MCF 10A (cell line): ENCODE measurements at regions of chr5 and their contacts with region 1.

Region 1: GRCh38 chr5:50962934-50963872 is 296.8 kb downstream of the PARP8 start:
- DNase-seq: peak; percentile 77
- H3K4me3 Mint-ChIP-seq: peak overlapping the region; percentile 74
- H3K27ac Mint-ChIP-seq: no peak overlapping the region
- H3K4me1 Mint-ChIP-seq: peaks cover under 1% of the 10 kb centered on the region
- H3K27me3 Mint-ChIP-seq: peaks cover 78% of the 10 kb centered on the region
- CTCF ChIP-seq: peak; percentile 98

Region 2: DNA sequence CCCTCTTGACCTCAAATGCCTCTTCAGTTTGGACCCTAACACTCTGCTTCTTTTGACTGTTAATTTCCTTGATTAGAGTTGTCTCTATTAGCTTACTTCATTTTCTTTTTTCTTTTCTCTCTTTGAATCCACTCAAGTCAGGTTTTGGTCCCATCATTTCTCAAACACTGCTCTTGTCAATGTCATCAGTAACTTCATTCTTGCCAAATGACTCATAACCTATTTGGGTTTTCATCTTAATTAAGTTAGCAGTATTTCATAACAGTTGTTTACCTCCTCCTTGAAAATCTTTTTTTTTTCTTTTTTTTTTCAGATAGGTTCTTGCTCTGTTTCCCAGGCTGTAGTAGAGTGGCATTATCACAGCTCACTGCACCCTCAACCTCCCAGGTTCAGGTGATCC is 177.1 kb before region 1 on chr5:
- CTCF ChIA-PET with region 1: no interaction called
- POLR2A ChIA-PET with region 1: no interaction called
- intact Hi-C with region 1: no loop called
- DNase-seq: peak; percentile 30
- H3K4me3 Mint-ChIP-seq: no peak overlapping the region
- H3K27ac Mint-ChIP-seq: no peak overlapping the region
- H3K4me1 Mint-ChIP-seq: peaks cover 6% of the 10 kb centered on the region
- H3K27me3 Mint-ChIP-seq: no peaks in the 10 kb centered on the region
- CTCF ChIP-seq: no peak

Region 3: GRCh38 chr5:50984640-50985039 is 21.4 kb after region 1 on chr5:
- CTCF ChIA-PET with region 1: interaction called, 16 read pairs
- POLR2A ChIA-PET with region 1: interaction called, 3 read pairs
- intact Hi-C with region 1: no loop called
- DNase-seq: no peak
- H3K4me3 Mint-ChIP-seq: no peak overlapping the region
- H3K27ac Mint-ChIP-seq: no peak overlapping the region
- H3K4me1 Mint-ChIP-seq: no peaks in the 10 kb centered on the region
- H3K27me3 Mint-ChIP-seq: peaks cover 25% of the 10 kb centered on the region
- CTCF ChIP-seq: no peak

Region 4: DNA sequence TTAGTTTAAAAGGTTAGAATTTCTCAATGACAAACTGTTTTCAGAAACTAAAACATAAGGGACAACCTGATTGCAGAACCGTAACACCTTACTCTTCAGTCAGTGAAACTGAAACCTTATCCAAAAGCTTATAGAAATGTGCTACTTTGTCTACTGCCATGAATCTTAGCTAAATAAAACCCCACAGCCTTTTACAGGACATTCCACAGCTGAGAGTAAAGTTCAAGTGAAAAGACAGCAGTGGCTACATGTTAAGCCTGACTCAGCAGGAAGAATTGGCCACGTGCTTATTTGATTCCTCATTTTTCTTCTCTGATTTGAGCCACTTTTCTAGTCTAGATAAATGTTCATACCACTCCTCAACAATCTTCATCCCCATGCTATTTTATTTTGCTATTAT is 141.4 kb after region 1 on chr5:
- CTCF ChIA-PET with region 1: no interaction called
- POLR2A ChIA-PET with region 1: no interaction called
- intact Hi-C with region 1: no loop called
- DNase-seq: no peak
- H3K4me3 Mint-ChIP-seq: no peak overlapping the region
- H3K27ac Mint-ChIP-seq: no peak overlapping the region
- H3K4me1 Mint-ChIP-seq: peaks cover 6% of the 10 kb centered on the region
- H3K27me3 Mint-ChIP-seq: peaks cover 51% of the 10 kb centered on the region
- CTCF ChIP-seq: no peak

Region 5: DNA sequence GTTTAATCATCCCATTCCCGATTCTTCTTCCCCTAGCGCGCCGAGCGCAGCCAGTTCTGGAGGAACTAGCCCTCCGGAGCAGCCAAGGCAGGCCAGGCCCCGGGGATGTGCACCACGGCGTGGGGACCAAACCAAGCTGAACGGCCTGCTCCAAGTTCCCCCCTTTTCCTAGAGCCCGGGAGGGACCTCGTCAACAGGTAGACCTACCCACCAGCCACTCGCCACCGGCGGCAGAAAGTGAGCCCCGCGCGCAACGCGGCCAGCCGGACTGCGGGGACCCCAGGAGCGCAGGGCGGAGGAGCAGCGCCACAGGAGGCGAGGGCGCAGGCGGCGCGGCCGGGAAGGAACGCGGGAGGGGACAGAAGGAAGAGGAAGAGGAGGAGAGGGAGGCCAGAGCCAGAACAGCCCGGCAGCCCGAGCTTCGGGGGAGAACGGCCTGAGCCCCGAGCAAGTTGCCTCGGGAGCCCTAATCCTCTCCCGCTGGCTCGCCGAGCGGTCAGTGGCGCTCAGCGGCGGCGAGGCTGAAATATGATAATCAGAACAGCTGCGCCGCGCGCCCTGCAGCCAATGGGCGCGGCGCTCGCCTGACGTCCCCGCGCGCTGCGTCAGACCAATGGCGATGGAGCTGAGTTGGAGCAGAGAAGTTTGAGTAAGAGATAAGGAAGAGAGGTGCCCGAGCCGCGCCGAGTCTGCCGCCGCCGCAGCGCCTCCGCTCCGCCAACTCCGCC is 419.7 kb after region 1 on chr5 and contains the start of gene ISL1:
- CTCF ChIA-PET with region 1: interaction called, 18 read pairs
- POLR2A ChIA-PET with region 1: interaction called, 3 read pairs
- intact Hi-C with region 1: loop called (anchors 1 kb)
- DNase-seq: peak; percentile 79
- H3K4me3 Mint-ChIP-seq: peak within 1 kb of the TSS; percentile 98
- H3K27ac Mint-ChIP-seq: peak within 1 kb of the TSS; percentile 83
- H3K4me1 Mint-ChIP-seq: peaks cover 46% of the 10 kb centered on the region
- H3K27me3 Mint-ChIP-seq: no peaks in the 10 kb centered on the region
- CTCF ChIP-seq: no peak
- total RNA-seq, gene ISL1: 1.2 TPM in 2 replicates

Region 6: GRCh38 chr5:51846015-51846414 is 882.8 kb after region 1 on chr5:
- CTCF ChIA-PET with region 1: interaction called, 7 read pairs
- POLR2A ChIA-PET with region 1: no interaction called
- intact Hi-C with region 1: loop called (anchors 2 kb)
- DNase-seq: peak; percentile 13
- H3K4me3 Mint-ChIP-seq: no peak overlapping the region
- H3K27ac Mint-ChIP-seq: no peak overlapping the region
- H3K4me1 Mint-ChIP-seq: no peaks in the 10 kb centered on the region
- H3K27me3 Mint-ChIP-seq: no peaks in the 10 kb centered on the region
- CTCF ChIP-seq: no peak

Region 7: GRCh38 chr5:52007230-52007858 is 1044.1 kb after region 1 on chr5:
- CTCF ChIA-PET with region 1: interaction called, 31 read pairs
- POLR2A ChIA-PET with region 1: interaction called, 3 read pairs
- intact Hi-C with region 1: loop called (anchors 1 kb)
- DNase-seq: peak; percentile 59
- H3K4me3 Mint-ChIP-seq: no peak overlapping the region
- H3K27ac Mint-ChIP-seq: no peak overlapping the region
- H3K4me1 Mint-ChIP-seq: no peaks in the 10 kb centered on the region
- H3K27me3 Mint-ChIP-seq: peaks cover 38% of the 10 kb centered on the region
- CTCF ChIP-seq: peak; percentile 66

Region 8: GRCh38 chr5:52657247-52657645 is 1694.0 kb after region 1 on chr5:
- CTCF ChIA-PET with region 1: interaction called, 27 read pairs
- POLR2A ChIA-PET with region 1: no interaction called
- intact Hi-C with region 1: loop called (anchors 2 kb)
- DNase-seq: peak; percentile 46
- H3K4me3 Mint-ChIP-seq: no peak overlapping the region
- H3K27ac Mint-ChIP-seq: no peak overlapping the region
- H3K4me1 Mint-ChIP-seq: no peaks in the 10 kb centered on the region
- H3K27me3 Mint-ChIP-seq: peaks cover 70% of the 10 kb centered on the region
- CTCF ChIP-seq: peak; percentile 41